ENCODE measurements at regions of chr3 and their contacts with region 1.

Region 1: DNA sequence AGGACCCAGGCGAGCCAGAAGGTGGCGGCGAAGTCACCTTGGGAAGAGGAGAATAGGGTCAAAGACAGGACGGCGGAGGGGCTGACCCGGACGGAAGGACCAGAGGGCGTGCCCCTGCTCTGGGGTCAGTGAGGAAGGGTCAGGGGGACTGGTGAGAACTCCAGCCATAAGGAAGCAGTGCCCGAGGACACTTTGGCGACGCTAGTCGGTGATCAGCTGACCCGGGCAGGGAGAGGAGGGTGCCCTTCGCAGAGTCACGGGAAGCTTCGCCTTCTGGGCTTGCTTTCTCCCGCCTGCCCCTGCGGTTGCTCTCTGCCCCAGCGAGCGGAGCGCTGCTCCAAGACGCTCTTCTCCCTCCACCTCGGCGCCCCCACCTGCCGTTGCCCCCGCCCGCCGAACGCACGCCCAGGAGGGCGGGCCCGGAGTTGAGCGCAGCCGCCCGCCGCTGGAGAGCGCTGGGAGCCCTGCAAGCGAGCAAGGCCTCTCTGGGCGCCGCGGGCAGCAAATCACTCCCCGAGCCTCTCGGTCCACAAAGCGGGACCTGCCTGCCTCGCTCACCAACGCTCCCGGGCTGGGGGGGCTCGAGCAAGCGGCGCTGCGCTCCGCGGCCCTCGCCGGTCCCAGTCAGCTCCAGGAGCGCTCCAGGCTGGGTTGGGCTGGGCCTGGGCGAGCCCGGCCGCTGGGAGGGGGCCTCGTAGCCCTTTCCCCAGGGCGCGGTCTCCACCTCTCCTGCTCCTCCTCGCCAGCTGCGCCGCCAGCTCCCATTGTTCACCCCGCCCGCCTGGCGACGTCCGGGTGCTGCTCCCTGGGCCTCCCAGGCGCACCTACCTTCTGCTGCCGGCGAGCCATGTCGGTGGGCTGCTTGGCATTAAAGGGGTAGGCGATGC is 1.2 kb downstream of the CADPS start:
- DNase-seq: peak; percentile 70 to 90
- H3K4me3 ChIP-seq: peak overlapping the region; percentile 67 to 82 (median 74)
- H3K27ac ChIP-seq: peak overlapping the region; percentile 35; the same call in 1 of the 2 replicates
- H3K4me1 ChIP-seq: peaks cover 0 to 1% (median 0%) of the 10 kb centered on the region in 4 experiments; a peak in 3 of 7 replicates
- H3K27me3 ChIP-seq: no peaks in the 10 kb centered on the region
- CTCF ChIP-seq: peak; percentile 71 to 76 (median 76)
- EP300 ChIP-seq: no peak
- POLR2A ChIP-seq: peak in 1 of 2 experiments; percentile 54; a peak in 1 of 3 replicates
- RAD21 ChIP-seq: peak; percentile 78 to 85

Region 2: DNA sequence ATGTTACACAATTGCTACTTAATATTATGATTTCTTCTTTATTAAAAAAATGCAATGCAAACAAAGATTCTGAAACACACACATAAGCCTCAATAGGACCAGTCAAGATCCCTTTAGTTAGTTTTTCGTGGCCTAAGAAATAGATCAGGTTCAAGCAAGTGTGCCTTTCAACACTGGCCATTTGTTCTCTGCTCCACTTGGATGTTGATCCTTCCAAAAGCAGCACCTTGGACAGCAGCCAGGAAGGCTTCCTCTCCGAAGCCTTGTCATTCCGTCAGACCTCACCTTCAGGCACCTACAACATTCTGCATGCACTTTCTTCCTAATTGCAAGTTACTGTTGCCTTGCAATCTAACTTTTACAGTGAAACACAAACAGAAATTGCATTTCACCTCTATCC is 344.8 kb before region 1 on chr3:
- CTCF ChIA-PET with region 1: no interaction called
- POLR2A ChIA-PET with region 1: no interaction called
- DNase-seq: peak; percentile 15 to 85
- H3K4me3 ChIP-seq: no peak overlapping the region
- H3K27ac ChIP-seq: no peak overlapping the region
- H3K4me1 ChIP-seq: no peaks in the 10 kb centered on the region
- H3K27me3 ChIP-seq: no peaks in the 10 kb centered on the region
- CTCF ChIP-seq: no peak
- EP300 ChIP-seq: no peak
- POLR2A ChIP-seq: no peak
- RAD21 ChIP-seq: no peak

Region 3: DNA sequence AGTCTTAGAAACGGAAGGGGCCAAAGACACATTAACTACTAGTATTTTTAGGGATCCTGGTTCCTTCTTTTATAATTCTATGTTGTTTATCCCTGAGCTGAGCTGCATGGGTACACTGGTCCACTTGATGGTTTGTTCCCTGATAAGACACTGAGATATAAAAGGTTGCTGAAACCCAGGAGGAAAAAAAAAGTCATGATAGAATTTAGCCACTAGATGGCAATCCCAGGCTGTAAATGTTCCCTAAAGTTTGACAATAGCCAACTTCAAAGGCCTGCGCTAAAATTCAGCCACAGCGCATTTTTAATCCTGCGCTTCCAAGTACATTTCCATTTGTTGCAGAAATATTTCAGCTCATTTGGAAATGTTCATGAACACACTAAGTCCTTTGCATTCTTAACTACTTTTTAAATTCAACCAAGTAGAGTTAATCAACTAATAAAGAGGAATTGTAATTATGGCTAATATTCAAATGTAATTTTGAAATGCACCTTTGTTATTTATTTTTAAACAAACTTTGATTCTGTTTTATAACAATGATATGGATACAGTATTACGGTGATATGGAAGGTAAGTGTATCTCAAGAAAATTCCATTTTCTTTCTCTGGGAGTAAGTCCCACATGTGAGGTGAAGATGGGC is 251.3 kb before region 1 on chr3:
- CTCF ChIA-PET with region 1: interaction called, 11 read pairs
- POLR2A ChIA-PET with region 1: no interaction called
- DNase-seq: no peak
- H3K4me3 ChIP-seq: no peak overlapping the region
- H3K27ac ChIP-seq: no peak overlapping the region
- H3K4me1 ChIP-seq: no peaks in the 10 kb centered on the region
- H3K27me3 ChIP-seq: no peaks in the 10 kb centered on the region
- CTCF ChIP-seq: peak in 2 of 3 experiments; percentile 61 to 63; a peak in 3 of 4 replicates
- EP300 ChIP-seq: no peak
- POLR2A ChIP-seq: no peak
- RAD21 ChIP-seq: peak; percentile 83 to 88

Region 4: DNA sequence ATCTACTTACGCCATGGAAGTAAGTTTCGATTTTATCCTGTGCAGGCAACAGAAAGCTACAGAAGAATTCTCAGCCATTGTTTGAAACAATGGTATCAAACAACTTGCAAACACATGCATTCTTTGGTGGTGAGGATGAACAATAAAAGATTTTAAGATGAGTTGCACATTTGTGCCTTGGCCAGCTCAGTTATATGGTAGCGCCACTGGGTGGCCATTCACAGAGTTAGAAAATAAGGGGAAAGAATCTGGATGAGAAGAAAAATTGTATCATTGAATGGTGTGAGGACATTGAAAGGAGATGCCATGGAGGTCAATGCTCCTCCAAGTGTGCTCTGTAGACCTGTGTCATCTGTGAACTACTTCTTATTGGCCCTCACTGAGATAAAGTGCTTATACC is 10.4 kb before region 1 on chr3:
- CTCF ChIA-PET with region 1: interaction called, 26 read pairs
- POLR2A ChIA-PET with region 1: interaction called, 6 read pairs
- DNase-seq: no peak
- H3K4me3 ChIP-seq: no peak overlapping the region
- H3K27ac ChIP-seq: no peak overlapping the region
- H3K4me1 ChIP-seq: peaks cover 0 to 8% (median 4%) of the 10 kb centered on the region in 4 experiments; a peak in 4 of 7 replicates
- H3K27me3 ChIP-seq: no peaks in the 10 kb centered on the region
- CTCF ChIP-seq: peak in 1 of 3 experiments; percentile 26; a peak in 1 of 4 replicates
- EP300 ChIP-seq: no peak
- POLR2A ChIP-seq: no peak
- RAD21 ChIP-seq: peak; percentile 48 to 55

Region 5: DNA sequence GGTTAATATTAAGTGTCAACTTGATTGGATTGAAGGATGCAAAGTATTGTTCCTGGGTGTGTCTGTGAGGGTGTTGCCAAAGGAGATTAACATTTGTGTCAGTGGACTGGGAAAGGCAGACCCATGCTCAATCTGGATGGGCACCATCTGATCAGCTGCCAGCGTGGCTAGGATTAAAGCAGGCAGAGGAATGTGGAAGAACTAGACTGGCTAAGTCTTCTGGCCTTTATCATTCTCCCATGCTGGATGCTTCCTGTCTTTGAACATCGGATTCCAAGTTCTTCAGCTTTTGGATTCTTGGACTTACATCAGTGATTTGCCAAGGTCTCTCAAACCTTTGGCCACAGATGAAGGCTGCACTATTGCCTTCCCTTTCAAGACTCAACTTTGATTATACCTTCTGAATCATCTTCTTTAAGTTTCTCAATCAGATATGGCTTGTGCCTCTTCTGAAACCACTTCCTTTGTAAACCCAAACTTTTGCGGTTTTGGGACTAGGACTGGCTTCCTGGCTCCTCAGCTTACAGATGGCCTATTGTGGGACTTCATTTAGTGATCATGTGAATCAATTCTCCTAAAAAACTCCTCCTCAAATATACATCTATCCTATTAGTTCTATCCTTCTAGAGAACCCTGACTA is 48.2 kb after region 1 on chr3:
- CTCF ChIA-PET with region 1: interaction called, 46 read pairs
- POLR2A ChIA-PET with region 1: interaction called, 5 read pairs
- DNase-seq: no peak
- H3K4me3 ChIP-seq: no peak overlapping the region
- H3K27ac ChIP-seq: no peak overlapping the region
- H3K4me1 ChIP-seq: peaks cover 0 to 6% (median 4%) of the 10 kb centered on the region in 4 experiments; a peak in 6 of 7 replicates
- H3K27me3 ChIP-seq: peaks cover 0 to 1% (median 0%) of the 10 kb centered on the region in 4 experiments; a peak in 2 of 7 replicates
- CTCF ChIP-seq: no peak
- EP300 ChIP-seq: no peak
- POLR2A ChIP-seq: no peak
- RAD21 ChIP-seq: no peak

Region 6: DNA sequence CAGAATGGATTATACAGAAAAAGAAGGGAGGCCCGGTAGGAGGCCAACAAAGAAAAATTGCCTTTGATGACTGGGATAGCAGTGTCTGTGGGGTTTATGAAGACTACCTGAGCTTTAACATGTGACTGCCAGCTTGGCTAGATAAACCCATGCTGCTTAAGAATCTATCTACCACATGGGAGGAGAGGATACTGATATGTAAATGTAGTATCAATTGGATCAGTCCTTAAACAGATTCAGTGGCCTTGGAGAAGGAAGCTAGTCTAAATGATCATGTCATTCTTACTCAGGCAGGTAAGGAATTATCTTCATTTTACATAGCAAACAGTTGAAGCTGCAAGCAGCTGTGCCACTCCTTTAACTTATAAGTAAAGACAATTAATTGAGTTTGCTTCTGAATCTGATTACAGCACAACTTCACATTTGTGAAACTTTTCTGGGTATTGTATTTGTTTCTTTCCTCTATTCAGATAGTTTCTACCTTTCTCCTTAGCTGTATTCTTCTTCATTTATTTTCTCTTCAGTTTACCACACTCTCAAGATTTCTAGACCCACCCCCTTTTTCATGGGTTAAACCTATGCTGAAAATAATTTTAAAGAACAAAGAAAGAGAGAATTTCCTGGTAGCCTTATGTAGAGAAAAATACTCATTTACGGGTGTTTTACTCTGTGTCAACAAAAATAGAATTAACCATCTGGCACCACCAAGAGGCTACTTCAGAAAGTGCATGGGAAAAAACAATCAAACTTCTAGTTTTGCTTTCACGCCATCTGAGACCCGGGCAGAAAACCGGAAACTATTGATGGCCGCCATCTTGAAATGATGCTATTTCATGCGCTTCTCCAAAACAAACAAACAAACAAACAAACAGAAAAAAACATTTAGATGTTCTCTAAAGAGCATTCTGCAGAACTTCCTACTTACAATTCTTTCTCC is 354.4 kb after region 1 on chr3:
- CTCF ChIA-PET with region 1: interaction called, 11 read pairs
- POLR2A ChIA-PET with region 1: interaction called, 4 read pairs
- DNase-seq: no peak
- H3K4me3 ChIP-seq: no peak overlapping the region
- H3K27ac ChIP-seq: no peak overlapping the region
- H3K4me1 ChIP-seq: peaks cover 0 to 7% (median 5%) of the 10 kb centered on the region in 4 experiments; a peak in 5 of 7 replicates
- H3K27me3 ChIP-seq: no peaks in the 10 kb centered on the region
- CTCF ChIP-seq: peak in 2 of 3 experiments; percentile 55 to 64; a peak in 2 of 4 replicates
- EP300 ChIP-seq: no peak
- POLR2A ChIP-seq: no peak
- RAD21 ChIP-seq: peak; percentile 72 to 81

Measured in H1 (cell line).